ENCODE measurements at regions of chr11 and their contacts with region 1.

Region 1: DNA sequence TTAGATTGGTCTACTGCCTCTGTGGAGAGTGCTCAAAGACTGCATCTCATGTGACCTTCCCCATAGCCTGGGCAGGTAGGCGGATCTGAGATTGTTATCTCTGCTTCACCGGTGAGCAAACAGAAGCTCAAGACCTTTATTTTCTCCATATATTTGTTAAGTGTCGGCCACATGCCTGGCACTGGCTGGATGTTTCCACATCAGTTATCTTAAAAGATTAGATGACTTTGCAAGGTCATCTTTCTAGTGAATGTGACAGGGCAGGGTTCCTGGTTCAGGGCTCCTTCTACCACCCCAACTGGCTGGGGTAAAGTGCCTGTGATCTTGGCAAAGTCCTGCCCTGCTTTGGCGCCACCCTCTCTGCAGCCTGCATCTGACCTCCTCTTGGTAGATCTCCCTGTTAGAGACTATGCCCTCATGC is 125.0 kb downstream of the CCDC81 start:
- DNase-seq: peak; percentile 89 to 94
- H3K4me3 ChIP-seq: no peak overlapping the region
- H3K4me3 Mint-ChIP-seq: no peak overlapping the region
- H3K27ac Mint-ChIP-seq: no peak overlapping the region
- H3K4me1 ChIP-seq: peaks cover 59% of the 10 kb centered on the region
- H3K4me1 Mint-ChIP-seq: peaks cover 13% of the 10 kb centered on the region
- H3K27me3 ChIP-seq: no peaks in the 10 kb centered on the region
- H3K27me3 Mint-ChIP-seq: no peaks in the 10 kb centered on the region
- CTCF ChIP-seq: no peak

Region 2: GRCh38 chr11:86003654-86004053 is 496.1 kb before region 1 on chr11:
- CTCF ChIA-PET with region 1: no interaction called
- POLR2A ChIA-PET with region 1: no interaction called
- intact Hi-C with region 1: no loop called
- DNase-seq: no peak
- H3K4me3 ChIP-seq: no peak overlapping the region
- H3K4me3 Mint-ChIP-seq: no peak overlapping the region
- H3K27ac Mint-ChIP-seq: peak overlapping the region; percentile 22
- H3K4me1 ChIP-seq: peaks cover 26% of the 10 kb centered on the region
- H3K4me1 Mint-ChIP-seq: peaks cover 30% of the 10 kb centered on the region
- H3K27me3 ChIP-seq: no peaks in the 10 kb centered on the region
- H3K27me3 Mint-ChIP-seq: no peaks in the 10 kb centered on the region
- CTCF ChIP-seq: no peak

Region 3: GRCh38 chr11:86456052-86456939 is 43.4 kb before region 1 on chr11:
- CTCF ChIA-PET with region 1: no interaction called
- POLR2A ChIA-PET with region 1: no interaction called
- intact Hi-C with region 1: loop called (anchors 2 kb)
- DNase-seq: peak; percentile 91 to 93
- H3K4me3 ChIP-seq: no peak overlapping the region
- H3K4me3 Mint-ChIP-seq: no peak overlapping the region
- H3K27ac Mint-ChIP-seq: peak overlapping the region; percentile 65
- H3K4me1 ChIP-seq: peaks cover 29% of the 10 kb centered on the region
- H3K4me1 Mint-ChIP-seq: peaks cover 41% of the 10 kb centered on the region
- H3K27me3 ChIP-seq: no peaks in the 10 kb centered on the region
- H3K27me3 Mint-ChIP-seq: no peaks in the 10 kb centered on the region
- CTCF ChIP-seq: peak; percentile 98

Region 4: DNA sequence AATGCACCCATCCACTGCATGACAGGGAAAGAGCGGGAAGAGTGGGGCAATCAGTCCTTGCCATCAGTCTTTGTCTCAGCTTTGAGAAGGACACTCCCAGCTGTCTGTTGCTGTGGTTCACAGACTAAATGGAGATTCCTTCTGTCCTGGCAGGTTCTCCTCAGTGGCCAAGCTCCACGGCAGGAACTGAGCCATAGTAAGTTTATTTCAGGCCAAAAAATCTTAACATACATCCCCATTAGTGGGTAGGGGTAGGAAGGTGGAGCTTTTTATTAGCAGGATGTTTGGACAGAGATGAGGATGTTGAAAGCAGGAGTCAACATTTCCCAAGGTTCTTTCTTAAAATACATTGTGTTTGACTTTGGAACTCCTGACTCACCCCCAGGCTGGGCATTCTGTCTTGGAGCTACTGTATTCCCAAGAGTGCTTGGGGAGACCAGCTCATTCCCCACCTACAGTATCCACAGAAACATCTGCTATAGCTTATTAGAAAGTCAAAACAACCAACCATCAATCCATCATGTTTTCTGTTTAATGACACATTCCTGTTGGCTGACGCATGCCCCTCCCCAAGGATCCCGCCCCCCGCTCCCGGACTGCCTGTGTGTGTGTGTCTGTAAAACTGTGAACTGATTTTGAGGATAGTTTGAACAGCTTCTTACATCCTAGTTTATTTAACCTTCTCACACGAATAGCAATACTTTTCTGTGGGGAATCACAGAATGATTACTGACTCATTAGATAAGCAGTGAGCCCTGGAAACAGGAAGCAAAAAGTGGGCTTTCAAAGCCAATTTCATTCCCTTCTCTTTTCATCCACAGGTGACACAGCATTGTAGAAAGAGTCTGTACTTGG is 15.6 kb before region 1 on chr11:
- CTCF ChIA-PET with region 1: interaction called, 7 read pairs
- POLR2A ChIA-PET with region 1: interaction called, 4 read pairs
- intact Hi-C with region 1: loop called (anchors 1 kb)
- DNase-seq: peak; percentile 90 to 93
- H3K4me3 ChIP-seq: no peak overlapping the region
- H3K4me3 Mint-ChIP-seq: peak overlapping the region; percentile 1
- H3K27ac Mint-ChIP-seq: peak overlapping the region; percentile 77
- H3K4me1 ChIP-seq: peaks cover 54% of the 10 kb centered on the region
- H3K4me1 Mint-ChIP-seq: peaks cover 57% of the 10 kb centered on the region
- H3K27me3 ChIP-seq: no peaks in the 10 kb centered on the region
- H3K27me3 Mint-ChIP-seq: no peaks in the 10 kb centered on the region
- CTCF ChIP-seq: no peak

Region 5: DNA sequence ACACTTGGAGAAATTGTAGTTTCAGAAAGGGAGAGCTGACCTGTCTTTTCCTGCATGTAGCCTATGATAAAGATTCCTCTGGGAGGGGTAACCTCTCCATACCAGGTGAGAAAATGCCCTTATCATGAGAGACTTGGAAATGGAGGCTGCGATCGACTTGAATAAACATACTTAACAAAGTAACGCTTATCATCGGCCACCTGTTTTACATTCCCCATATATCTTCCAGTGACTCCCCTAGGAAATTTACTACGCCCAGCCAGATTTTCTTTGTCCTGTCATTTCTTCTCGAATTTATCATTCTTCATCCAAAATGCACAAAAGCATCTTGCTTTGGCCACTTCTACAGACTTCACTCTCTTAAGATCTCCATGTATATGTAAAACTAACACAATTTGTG is 18.5 kb after region 1 on chr11:
- CTCF ChIA-PET with region 1: no interaction called
- POLR2A ChIA-PET with region 1: no interaction called
- intact Hi-C with region 1: loop called (anchors 1 kb)
- DNase-seq: peak; percentile 75 to 76
- H3K4me3 ChIP-seq: no peak overlapping the region
- H3K4me3 Mint-ChIP-seq: peak overlapping the region; percentile 16
- H3K27ac Mint-ChIP-seq: peak overlapping the region; percentile 68
- H3K4me1 ChIP-seq: peaks cover 94% of the 10 kb centered on the region
- H3K4me1 Mint-ChIP-seq: peaks cover 48% of the 10 kb centered on the region
- H3K27me3 ChIP-seq: no peaks in the 10 kb centered on the region
- H3K27me3 Mint-ChIP-seq: no peaks in the 10 kb centered on the region
- CTCF ChIP-seq: no peak

Region 6: GRCh38 chr11:86571273-86571948 is 71.7 kb after region 1 on chr11:
- CTCF ChIA-PET with region 1: no interaction called
- POLR2A ChIA-PET with region 1: no interaction called
- intact Hi-C with region 1: loop called (anchors 1 kb)
- DNase-seq: peak; percentile 93
- H3K4me3 ChIP-seq: no peak overlapping the region
- H3K4me3 Mint-ChIP-seq: peak overlapping the region; percentile 6
- H3K27ac Mint-ChIP-seq: peak overlapping the region; percentile 2
- H3K4me1 ChIP-seq: peaks cover 32% of the 10 kb centered on the region
- H3K4me1 Mint-ChIP-seq: peaks cover 37% of the 10 kb centered on the region
- H3K27me3 ChIP-seq: no peaks in the 10 kb centered on the region
- H3K27me3 Mint-ChIP-seq: no peaks in the 10 kb centered on the region
- CTCF ChIP-seq: peak; percentile 95 to 96